CD8-positive, alpha-beta T cell (primary cell): ENCODE measurements at regions of chr6 and their contacts with region 1.

Region 1: DNA sequence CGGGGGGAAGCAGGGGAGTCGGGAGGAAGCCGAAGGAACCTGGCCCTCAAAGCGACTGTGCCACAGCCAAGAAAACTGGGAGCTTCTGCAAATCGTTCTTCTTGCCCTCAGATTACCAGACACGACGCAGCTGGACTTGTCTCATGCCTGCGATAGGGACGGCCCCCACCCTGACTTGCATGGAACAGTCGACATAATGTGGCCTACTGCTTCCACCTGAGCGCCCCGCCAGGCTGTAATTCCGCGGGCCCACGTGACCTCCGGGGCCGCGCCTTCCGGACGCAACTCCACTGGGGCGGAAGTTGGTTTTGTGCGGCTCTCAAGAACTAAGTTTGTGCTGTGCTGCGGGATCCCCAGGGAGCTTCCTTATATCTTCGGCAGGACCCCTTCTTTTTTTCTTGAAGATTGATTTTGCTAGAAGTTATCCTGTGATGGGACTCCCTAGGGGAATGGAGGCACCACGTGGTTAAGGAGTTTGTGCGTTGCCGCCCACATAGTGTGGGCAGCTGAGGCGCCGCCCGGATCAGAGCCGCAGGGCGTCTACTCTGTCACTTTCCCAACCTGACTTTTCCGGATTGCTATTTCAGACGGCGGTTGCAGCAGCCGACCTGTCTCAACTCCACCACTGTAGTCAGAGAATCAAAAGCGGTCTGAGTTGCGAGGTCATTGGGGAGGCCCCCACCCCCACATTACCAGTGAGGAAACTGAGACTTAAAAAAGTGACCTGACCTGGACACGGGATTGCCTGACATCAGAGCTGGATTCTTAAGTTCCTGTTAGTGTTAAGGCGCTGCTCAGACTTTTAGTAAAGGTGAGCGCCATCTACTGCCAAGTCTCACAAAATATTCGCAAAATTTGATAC is 540 bp upstream of the CD164 start:
- DNase-seq: peak; percentile 85 to 97 (median 91)
- ATAC-seq: peak; percentile 66
- H3K4me3 ChIP-seq: peak overlapping the region; percentile 61 to 78
- H3K4me3 Mint-ChIP-seq: peak overlapping the region; percentile 93
- H3K27ac ChIP-seq: peak overlapping the region; percentile 83 to 99
- H3K27ac Mint-ChIP-seq: peak overlapping the region; percentile 99
- H3K4me1 ChIP-seq: peaks cover 33% of the 10 kb centered on the region
- H3K4me1 Mint-ChIP-seq: peaks cover 45% of the 10 kb centered on the region
- H3K27me3 ChIP-seq: no peaks in the 10 kb centered on the region
- H3K27me3 Mint-ChIP-seq: no peaks in the 10 kb centered on the region
- CTCF ChIP-seq: peak; percentile 73

Region 2: DNA sequence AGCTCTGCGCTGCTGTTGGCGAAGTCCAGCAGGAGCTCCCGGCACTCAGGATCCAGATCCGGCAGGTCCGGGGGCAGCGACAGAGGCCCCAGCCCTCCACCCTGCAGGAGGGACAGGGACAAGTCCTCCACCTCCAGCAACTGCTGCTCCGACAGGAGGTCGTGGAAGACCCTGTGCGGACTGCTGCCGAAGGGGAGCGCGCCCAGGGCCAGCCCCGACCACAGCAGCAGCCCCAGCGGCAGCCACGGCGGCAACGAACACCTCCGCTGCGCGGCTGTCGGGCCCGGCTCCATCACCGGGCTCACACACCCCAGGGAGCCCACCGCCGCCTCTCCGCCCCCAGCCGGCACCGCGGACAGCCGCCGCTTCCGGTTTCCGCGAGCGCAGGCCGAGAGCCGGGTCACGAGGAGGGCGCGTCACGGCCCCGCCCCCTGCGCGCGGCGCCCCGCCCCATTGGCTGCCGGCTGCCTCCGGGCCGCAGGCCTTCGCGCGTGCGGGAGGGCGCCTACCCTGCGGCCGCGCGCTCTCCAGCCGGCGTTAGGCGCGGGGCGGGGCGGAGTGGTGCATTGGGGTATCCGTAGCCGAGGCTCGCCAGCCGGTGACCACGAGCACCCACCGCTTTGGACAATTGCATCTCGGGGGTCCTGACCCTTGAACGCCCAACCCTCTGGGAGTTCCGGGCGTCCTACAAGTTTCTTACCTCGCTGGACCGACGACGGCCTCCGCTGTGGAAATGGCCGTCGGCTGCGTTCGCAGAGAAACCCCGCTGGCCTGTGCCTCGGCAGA is 1308.3 kb before region 1 on chr6 and contains the start of gene OSTM1:
- CTCF ChIA-PET with region 1: no interaction called
- POLR2A ChIA-PET with region 1: no interaction called
- intact Hi-C with region 1: loop called in 1 of 2 experiments (anchors 10 kb)
- DNase-seq: peak; percentile 89 to 97 (median 94)
- ATAC-seq: peak; percentile 96
- H3K4me3 ChIP-seq: peak within 1 kb of the TSS; percentile 98 to 99
- H3K4me3 Mint-ChIP-seq: peak within 1 kb of the TSS; percentile 89
- H3K27ac ChIP-seq: peak within 1 kb of the TSS; percentile 85 to 88
- H3K27ac Mint-ChIP-seq: peak within 1 kb of the TSS; percentile 88
- H3K4me1 ChIP-seq: peaks cover 19% of the 10 kb centered on the region
- H3K4me1 Mint-ChIP-seq: peaks cover 29% of the 10 kb centered on the region
- H3K27me3 ChIP-seq: no peaks in the 10 kb centered on the region
- H3K27me3 Mint-ChIP-seq: peaks cover 2% of the 10 kb centered on the region
- CTCF ChIP-seq: no peak
- total RNA-seq, gene OSTM1: 20.0 to 25.0 TPM

Region 3: DNA sequence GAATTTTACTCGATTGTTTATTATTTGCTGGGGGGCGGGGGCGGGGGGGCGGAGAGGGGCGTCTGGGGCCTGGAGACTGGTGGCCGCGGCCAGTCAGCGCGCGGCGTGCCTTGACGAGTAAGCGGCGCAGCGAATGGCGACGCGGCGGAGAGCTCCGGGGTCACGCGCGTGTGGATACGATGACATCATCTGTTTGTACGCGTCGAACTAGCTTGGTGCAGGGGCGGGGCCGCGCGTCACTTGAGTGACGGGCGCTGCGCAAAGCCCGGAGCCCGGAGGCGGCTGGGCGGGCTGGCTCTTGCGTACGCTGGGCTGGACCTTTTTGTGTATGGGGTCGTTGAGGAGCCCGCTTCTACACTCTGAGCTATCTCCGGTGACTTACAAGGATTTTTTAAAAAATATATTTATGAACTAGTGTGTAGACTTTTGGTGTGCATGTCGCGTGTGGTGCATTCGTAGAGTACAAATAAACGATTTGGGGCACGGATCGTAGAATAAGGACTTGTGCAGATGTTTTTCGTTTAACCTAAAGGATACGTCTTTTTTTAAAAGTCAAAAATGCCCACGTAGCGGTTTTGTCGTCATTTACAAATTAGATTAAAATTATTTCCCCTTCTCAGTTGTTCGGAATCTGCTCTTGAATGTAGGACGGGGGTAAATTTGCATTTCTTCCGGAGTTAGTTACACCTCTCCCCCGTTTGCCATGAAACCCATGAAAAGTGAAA is 824.3 kb before region 1 on chr6:
- CTCF ChIA-PET with region 1: interaction called, 3 read pairs
- POLR2A ChIA-PET with region 1: interaction called, 13 read pairs
- intact Hi-C with region 1: loop called (anchors 1 kb)
- DNase-seq: peak; percentile 92 to 100 (median 96)
- ATAC-seq: peak; percentile 68
- H3K4me3 ChIP-seq: peak overlapping the region; percentile 92 to 97
- H3K4me3 Mint-ChIP-seq: peak overlapping the region; percentile 97
- H3K27ac ChIP-seq: peak overlapping the region; percentile 87 to 99
- H3K27ac Mint-ChIP-seq: peak overlapping the region; percentile 99
- H3K4me1 ChIP-seq: peaks cover 16% of the 10 kb centered on the region
- H3K4me1 Mint-ChIP-seq: peaks cover 24% of the 10 kb centered on the region
- H3K27me3 ChIP-seq: no peaks in the 10 kb centered on the region
- H3K27me3 Mint-ChIP-seq: peaks cover 2% of the 10 kb centered on the region
- CTCF ChIP-seq: no peak

Region 4: GRCh38 chr6:109095027-109095834 is 287.6 kb before region 1 on chr6 and contains the start of gene CEP57L1:
- CTCF ChIA-PET with region 1: interaction called, 3 read pairs
- POLR2A ChIA-PET with region 1: interaction called, 14 read pairs
- intact Hi-C with region 1: loop called (anchors 1 to 2 kb)
- DNase-seq: peak; percentile 89 to 98 (median 95)
- ATAC-seq: peak; percentile 78
- H3K4me3 ChIP-seq: peak within 1 kb of the TSS; percentile 74
- H3K4me3 Mint-ChIP-seq: peak within 1 kb of the TSS; percentile 96
- H3K27ac ChIP-seq: peak within 1 kb of the TSS; percentile 91 to 95
- H3K27ac Mint-ChIP-seq: peak within 1 kb of the TSS; percentile 99
- H3K4me1 ChIP-seq: peaks cover 31% of the 10 kb centered on the region
- H3K4me1 Mint-ChIP-seq: peaks cover 49% of the 10 kb centered on the region
- H3K27me3 ChIP-seq: no peaks in the 10 kb centered on the region
- H3K27me3 Mint-ChIP-seq: no peaks in the 10 kb centered on the region
- CTCF ChIP-seq: no peak
- total RNA-seq, gene CEP57L1: 2.9 to 3.7 TPM

Region 5: GRCh38 chr6:109455502-109456282 is 72.9 kb after region 1 on chr6 and contains the start of gene MICAL1:
- CTCF ChIA-PET with region 1: interaction called, 9 read pairs
- POLR2A ChIA-PET with region 1: interaction called, 36 read pairs
- intact Hi-C with region 1: loop called (anchors 1 kb)
- DNase-seq: peak; percentile 53 to 91 (median 77)
- ATAC-seq: peak; percentile 58
- H3K4me3 ChIP-seq: peak within 1 kb of the TSS; percentile 93 to 99
- H3K4me3 Mint-ChIP-seq: peak within 1 kb of the TSS; percentile 97
- H3K27ac ChIP-seq: peak within 1 kb of the TSS; percentile 89 to 98
- H3K27ac Mint-ChIP-seq: peak within 1 kb of the TSS; percentile 98
- H3K4me1 ChIP-seq: peaks cover 55% of the 10 kb centered on the region
- H3K4me1 Mint-ChIP-seq: peaks cover 65% of the 10 kb centered on the region
- H3K27me3 ChIP-seq: no peaks in the 10 kb centered on the region
- H3K27me3 Mint-ChIP-seq: no peaks in the 10 kb centered on the region
- CTCF ChIP-seq: no peak
- total RNA-seq, gene MICAL1: 68.0 to 76.4 TPM

Region 6: GRCh38 chr6:110039364-110039980 is 656.7 kb after region 1 on chr6:
- CTCF ChIA-PET with region 1: interaction called, 9 read pairs
- POLR2A ChIA-PET with region 1: interaction called, 3 read pairs
- intact Hi-C with region 1: loop called in 1 of 2 experiments (anchors 2 kb)
- DNase-seq: peak; percentile 63 to 89 (median 79)
- ATAC-seq: peak; percentile 70
- H3K4me3 ChIP-seq: peak overlapping the region; percentile 49 to 57
- H3K4me3 Mint-ChIP-seq: peak overlapping the region; percentile 89
- H3K27ac ChIP-seq: peak overlapping the region; percentile 39 to 75
- H3K27ac Mint-ChIP-seq: peak overlapping the region; percentile 95
- H3K4me1 ChIP-seq: peaks cover 9% of the 10 kb centered on the region
- H3K4me1 Mint-ChIP-seq: peaks cover 22% of the 10 kb centered on the region
- H3K27me3 ChIP-seq: no peaks in the 10 kb centered on the region
- H3K27me3 Mint-ChIP-seq: no peaks in the 10 kb centered on the region
- CTCF ChIP-seq: peak; percentile 75